MCF 10A (cell line): ENCODE measurements at regions of chr1 and their contacts with region 1.

Region 1: GRCh38 chr1:19918057-19918456 is 5.4 kb downstream of the PLA2G2E start:
- DNase-seq: peak; percentile 84
- H3K4me3 Mint-ChIP-seq: no peak overlapping the region
- H3K27ac Mint-ChIP-seq: no peak overlapping the region
- H3K4me1 Mint-ChIP-seq: peaks cover 11% of the 10 kb centered on the region
- H3K27me3 Mint-ChIP-seq: no peaks in the 10 kb centered on the region
- CTCF ChIP-seq: peak; percentile 90

Region 2: GRCh38 chr1:20100632-20101355 is 182.7 kb after region 1 on chr1:
- CTCF ChIA-PET with region 1: interaction called, 6 read pairs
- POLR2A ChIA-PET with region 1: no interaction called
- intact Hi-C with region 1: loop called (anchors 1 kb)
- DNase-seq: peak; percentile 61
- H3K4me3 Mint-ChIP-seq: no peak overlapping the region
- H3K27ac Mint-ChIP-seq: no peak overlapping the region
- H3K4me1 Mint-ChIP-seq: peaks cover 12% of the 10 kb centered on the region
- H3K27me3 Mint-ChIP-seq: no peaks in the 10 kb centered on the region
- CTCF ChIP-seq: peak; percentile 92

Region 3: GRCh38 chr1:20117236-20117635 is 199.2 kb after region 1 on chr1:
- CTCF ChIA-PET with region 1: interaction called, 10 read pairs
- POLR2A ChIA-PET with region 1: no interaction called
- intact Hi-C with region 1: no loop called
- DNase-seq: no peak
- H3K4me3 Mint-ChIP-seq: no peak overlapping the region
- H3K27ac Mint-ChIP-seq: no peak overlapping the region
- H3K4me1 Mint-ChIP-seq: no peaks in the 10 kb centered on the region
- H3K27me3 Mint-ChIP-seq: peaks cover 50% of the 10 kb centered on the region
- CTCF ChIP-seq: no peak

Region 4: DNA sequence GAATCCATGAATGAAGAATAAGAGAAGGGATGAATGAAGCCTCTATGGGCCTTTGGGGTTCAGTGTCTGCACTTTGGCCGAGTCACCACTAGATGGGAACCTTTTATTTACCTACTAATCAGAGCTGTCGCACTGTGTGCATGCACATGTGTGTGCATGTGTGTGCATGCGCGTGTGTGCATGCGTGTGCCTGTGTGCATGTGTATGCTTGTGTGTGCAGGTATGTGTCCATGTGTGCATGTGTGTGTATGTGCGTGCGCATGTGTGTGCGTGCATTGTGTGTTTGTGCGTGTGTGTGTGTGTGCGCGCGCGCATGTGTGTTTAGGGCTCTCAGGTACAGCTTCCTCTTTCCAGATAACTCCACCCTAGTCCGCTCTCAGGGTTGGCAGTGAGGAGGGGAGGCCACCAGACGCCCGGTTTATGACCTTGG is 247.5 kb after region 1 on chr1:
- CTCF ChIA-PET with region 1: interaction called, 12 read pairs
- POLR2A ChIA-PET with region 1: no interaction called
- intact Hi-C with region 1: no loop called
- DNase-seq: peak; percentile 46
- H3K4me3 Mint-ChIP-seq: no peak overlapping the region
- H3K27ac Mint-ChIP-seq: no peak overlapping the region
- H3K4me1 Mint-ChIP-seq: peaks cover 16% of the 10 kb centered on the region
- H3K27me3 Mint-ChIP-seq: no peaks in the 10 kb centered on the region
- CTCF ChIP-seq: peak; percentile 29

Region 5: DNA sequence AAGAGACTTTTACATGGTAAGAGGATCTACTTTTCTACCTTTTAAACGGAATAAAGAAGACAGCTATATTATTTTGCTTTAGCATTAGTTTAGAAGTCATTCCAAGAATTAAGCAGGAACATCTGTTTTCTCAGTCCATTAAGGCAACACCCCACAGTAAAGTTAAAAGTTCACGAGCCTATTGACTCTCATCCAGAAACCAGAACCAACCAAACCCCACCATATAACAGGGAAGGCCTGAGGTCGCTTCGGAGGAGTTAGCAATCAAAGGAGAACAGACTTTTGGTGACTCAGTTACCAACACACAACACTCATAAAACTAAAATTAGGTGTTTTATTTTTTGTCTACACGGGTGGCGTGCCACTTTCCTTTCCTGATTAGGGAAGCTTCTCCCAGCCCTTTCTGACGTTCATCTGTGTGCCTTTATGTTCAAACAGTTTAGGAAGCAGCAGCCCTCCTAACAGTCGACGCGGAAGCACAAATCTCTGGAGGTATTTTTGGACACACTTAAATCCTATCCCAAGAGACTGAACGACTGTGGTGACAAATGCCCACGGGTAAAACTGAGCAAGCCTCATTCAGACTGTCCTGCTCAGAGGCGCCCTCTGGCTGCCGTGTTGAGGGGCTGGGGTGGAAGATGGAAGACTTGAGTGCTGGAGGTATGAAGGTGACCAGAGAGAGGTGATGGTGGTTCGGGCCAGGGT is 276.9 kb after region 1 on chr1:
- CTCF ChIA-PET with region 1: interaction called, 4 read pairs
- POLR2A ChIA-PET with region 1: no interaction called
- intact Hi-C with region 1: loop called (anchors 2 kb)
- DNase-seq: peak; percentile 68
- H3K4me3 Mint-ChIP-seq: no peak overlapping the region
- H3K27ac Mint-ChIP-seq: no peak overlapping the region
- H3K4me1 Mint-ChIP-seq: peaks cover 31% of the 10 kb centered on the region
- H3K27me3 Mint-ChIP-seq: no peaks in the 10 kb centered on the region
- CTCF ChIP-seq: peak; percentile 59